Posterior vena cava (tissue), 2 donors: ENCODE measurements at regions of chr10 and their contacts with region 1.

Region 1: DNA sequence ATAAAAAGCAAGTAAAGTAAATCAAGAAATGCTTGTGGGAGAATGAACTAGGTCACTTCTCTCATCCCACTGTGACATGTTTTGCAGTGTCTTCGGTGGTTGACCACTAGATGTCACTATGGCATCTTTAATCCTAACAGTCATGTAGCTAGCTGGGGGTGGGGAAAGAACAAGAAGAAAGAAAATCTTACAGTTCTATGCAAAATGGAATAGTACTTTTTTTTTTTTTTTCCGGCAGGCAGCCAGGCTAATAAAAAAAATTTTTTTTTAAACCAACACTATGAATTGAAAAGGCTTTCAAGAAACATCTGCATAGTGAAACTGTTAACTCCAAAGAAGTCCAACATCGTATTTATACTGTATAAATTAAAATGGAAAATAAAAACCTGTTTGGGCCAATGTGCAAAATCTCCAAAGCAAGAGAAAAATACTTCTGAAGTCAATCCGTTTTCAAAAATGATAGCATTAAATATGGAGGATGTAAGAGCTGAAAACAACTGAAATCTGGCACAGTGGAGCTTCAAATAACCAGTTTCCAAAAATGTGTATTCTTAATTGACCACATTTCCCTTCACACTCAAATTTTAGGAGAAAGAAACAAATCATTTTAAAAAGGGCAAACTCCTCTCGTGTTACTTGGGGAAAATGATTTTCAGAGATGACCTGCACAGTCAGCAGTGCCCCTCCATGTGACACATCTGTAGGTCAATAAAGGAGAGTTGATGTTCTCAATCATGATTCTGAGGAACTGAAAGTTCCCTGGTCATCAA is 38.5 kb downstream of the CDK1 start:
- DNase-seq: no peak

Region 2: DNA sequence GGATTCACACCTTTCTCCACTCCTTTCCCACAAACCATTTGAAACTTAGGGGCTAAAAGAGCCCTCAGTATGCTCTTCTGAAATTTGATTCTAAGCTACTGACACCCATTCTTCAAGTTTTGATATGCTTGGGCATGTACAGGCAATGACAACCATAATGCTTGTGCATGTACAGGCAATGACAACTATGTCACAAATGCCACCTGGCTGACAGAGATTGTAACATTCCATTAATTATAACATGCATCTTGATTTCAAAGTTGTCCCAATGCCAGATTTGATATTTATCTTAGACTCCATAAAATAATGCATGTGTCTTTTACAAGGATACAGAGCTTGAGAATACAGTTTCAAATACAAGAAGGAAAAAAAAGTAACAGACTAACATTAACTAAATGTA is 56.1 kb before region 1 on chr10:
- intact Hi-C with region 1: no loop called
- DNase-seq: no peak

Region 3: GRCh38 chr10:60964257-60965235 is 147.7 kb after region 1 on chr10:
- intact Hi-C with region 1: loop called in 1 of 2 experiments (anchors 10 kb)
- DNase-seq: peak; percentile 82